MCF 10A (cell line): ENCODE measurements at regions of chrX and their contacts with region 1.

Region 1: GRCh38 chrX:131763674-131764073 is 219.8 kb downstream of the OR13H1 start:
- DNase-seq: peak; percentile 90
- H3K4me3 Mint-ChIP-seq: peak overlapping the region; percentile 65
- H3K27ac Mint-ChIP-seq: no peak overlapping the region
- H3K4me1 Mint-ChIP-seq: peaks cover 5% of the 10 kb centered on the region
- H3K27me3 Mint-ChIP-seq: no peaks in the 10 kb centered on the region
- CTCF ChIP-seq: peak; percentile 49

Region 2: GRCh38 chrX:131710431-131711045 is 53.1 kb before region 1 on chrX:
- CTCF ChIA-PET with region 1: interaction called, 4 read pairs
- POLR2A ChIA-PET with region 1: interaction called, 3 read pairs
- intact Hi-C with region 1: loop called (anchors 1 kb)
- DNase-seq: no peak
- H3K4me3 Mint-ChIP-seq: peak overlapping the region; percentile 67
- H3K27ac Mint-ChIP-seq: peak overlapping the region; percentile 49
- H3K4me1 Mint-ChIP-seq: peaks cover 8% of the 10 kb centered on the region
- H3K27me3 Mint-ChIP-seq: peaks cover 26% of the 10 kb centered on the region
- CTCF ChIP-seq: no peak

Region 3: GRCh38 chrX:131746474-131746968 is 17.2 kb before region 1 on chrX:
- CTCF ChIA-PET with region 1: interaction called, 5 read pairs
- POLR2A ChIA-PET with region 1: interaction called, 20 read pairs
- intact Hi-C with region 1: no loop called
- DNase-seq: peak; percentile 95
- H3K4me3 Mint-ChIP-seq: peak overlapping the region; percentile 93
- H3K27ac Mint-ChIP-seq: peak overlapping the region; percentile 94
- H3K4me1 Mint-ChIP-seq: peaks cover 13% of the 10 kb centered on the region
- H3K27me3 Mint-ChIP-seq: no peaks in the 10 kb centered on the region
- CTCF ChIP-seq: peak; percentile 62

Region 4: GRCh38 chrX:131778269-131779218 is 14.9 kb after region 1 on chrX:
- CTCF ChIA-PET with region 1: interaction called, 8 read pairs
- POLR2A ChIA-PET with region 1: interaction called, 6 read pairs
- intact Hi-C with region 1: loop called (anchors 1 kb)
- DNase-seq: peak; percentile 88
- H3K4me3 Mint-ChIP-seq: peak overlapping the region; percentile 72
- H3K27ac Mint-ChIP-seq: peak overlapping the region; percentile 97
- H3K4me1 Mint-ChIP-seq: peaks cover 9% of the 10 kb centered on the region
- H3K27me3 Mint-ChIP-seq: peaks cover 9% of the 10 kb centered on the region
- CTCF ChIP-seq: peak; percentile 39

Region 5: GRCh38 chrX:131812836-131813825 is 49.5 kb after region 1 on chrX:
- CTCF ChIA-PET with region 1: interaction called, 4 read pairs
- POLR2A ChIA-PET with region 1: no interaction called
- intact Hi-C with region 1: loop called (anchors 2 kb)
- DNase-seq: peak; percentile 80
- H3K4me3 Mint-ChIP-seq: peak overlapping the region; percentile 82
- H3K27ac Mint-ChIP-seq: peak overlapping the region; percentile 82
- H3K4me1 Mint-ChIP-seq: no peaks in the 10 kb centered on the region
- H3K27me3 Mint-ChIP-seq: no peaks in the 10 kb centered on the region
- CTCF ChIP-seq: peak; percentile 43